Posterior cingulate gyrus (tissue), 11 donors: ENCODE measurements at regions of chr1 and their contacts with region 1.

Region 1: DNA sequence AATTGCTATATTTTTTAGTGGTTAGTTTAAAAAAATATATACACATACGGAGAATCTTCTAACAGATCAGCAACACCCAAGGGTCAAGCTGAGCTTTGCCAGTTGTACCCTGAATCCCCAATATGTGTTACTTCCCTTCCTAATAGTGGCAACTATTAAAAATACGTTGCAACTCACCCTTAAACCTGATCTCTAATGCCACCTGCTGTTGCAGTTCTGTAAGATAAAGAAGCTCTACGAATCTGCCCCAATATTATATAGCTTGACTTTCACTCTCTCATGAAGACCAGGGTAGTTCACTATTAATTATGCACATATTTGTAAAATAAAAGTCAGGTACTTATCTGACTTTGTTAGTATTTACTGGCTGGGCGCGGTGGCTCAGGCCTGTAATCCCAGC is 58.4 kb downstream of the ASH1L start:
- DNase-seq: no peak

Region 2: GRCh38 chr1:155250633-155251449 is 253.4 kb before region 1 on chr1:
- intact Hi-C with region 1: loop called (anchors 10 kb)
- DNase-seq: peak; percentile 83 to 99 (median 94)

Region 3: DNA sequence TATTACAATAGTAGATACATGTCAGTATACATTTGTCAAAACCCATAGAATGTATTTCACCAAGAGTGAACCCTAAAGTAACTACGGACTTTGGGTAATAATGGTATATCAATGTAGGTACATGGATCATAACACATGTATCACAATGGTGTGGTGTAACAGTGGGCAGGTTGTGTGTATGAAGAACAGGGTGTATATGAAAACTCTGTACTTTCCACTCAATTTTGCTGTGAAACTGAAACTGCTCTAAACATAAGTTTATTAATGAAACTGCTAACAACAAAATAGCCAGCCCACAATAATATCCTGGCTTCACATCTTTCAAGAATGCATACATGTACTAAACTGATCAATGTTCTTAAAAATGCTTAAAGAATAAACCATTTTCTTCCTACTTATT is 93.3 kb before region 1 on chr1:
- intact Hi-C with region 1: no loop called
- DNase-seq: no peak

Region 4: DNA sequence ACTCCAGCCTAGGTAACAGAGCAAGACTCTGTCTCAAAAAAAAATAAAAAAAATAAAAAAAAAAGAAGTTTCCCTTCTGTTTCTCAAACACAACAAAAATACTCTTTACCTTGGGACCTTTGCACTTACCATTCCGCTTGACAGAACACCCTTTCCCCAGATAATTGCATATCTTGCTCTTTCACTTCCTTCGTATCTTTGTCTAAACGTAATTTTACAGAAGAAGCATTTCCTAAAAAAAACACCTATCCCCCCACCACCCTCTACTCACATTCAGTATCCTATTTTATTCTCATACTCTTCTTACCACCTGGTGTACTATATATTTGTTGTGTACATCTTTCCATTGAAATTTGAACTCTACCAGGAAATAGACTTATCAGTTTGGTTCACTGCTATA is 25.7 kb after region 1 on chr1:
- intact Hi-C with region 1: no loop called
- DNase-seq: no peak